ENCODE measurements at regions of chr21 and their contacts with region 1.

Region 1: DNA sequence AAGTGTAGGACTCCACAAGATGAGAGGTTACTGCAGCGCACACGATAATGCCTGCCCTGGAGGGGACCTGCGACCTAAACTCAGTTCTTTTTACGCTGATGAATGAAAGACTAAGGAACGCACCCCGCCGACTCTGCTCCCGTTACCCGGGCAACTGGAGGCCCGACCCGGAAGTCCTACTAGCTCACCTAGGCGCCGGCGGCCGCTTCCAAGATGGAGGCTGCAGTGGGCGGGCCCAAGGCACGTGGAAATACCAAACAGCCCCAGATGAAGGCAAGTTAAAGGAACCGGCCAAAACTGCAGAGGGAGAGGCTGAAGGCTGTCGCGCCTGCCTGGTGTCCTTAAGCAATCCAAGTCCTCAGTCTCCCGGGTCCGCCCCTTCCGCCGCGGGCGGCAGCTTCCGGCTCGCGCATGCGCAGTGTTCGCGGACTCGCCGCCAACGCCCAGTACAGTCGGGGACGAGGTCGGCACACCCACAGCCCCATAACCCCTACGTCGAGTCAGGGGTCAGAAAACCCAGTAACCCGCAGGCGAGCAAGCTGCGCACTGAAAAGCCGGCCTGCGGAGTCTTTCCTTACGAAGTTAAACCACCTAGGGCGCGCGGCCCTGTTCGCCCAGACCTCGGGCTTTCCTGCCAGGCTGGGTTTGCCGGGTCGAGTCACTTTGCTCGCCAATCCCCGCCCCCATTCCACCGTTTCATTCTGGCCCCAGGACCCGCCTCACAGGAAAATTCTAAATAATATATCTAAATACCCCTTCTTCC is at the start of gene SETD4:
- DNase-seq: peak; percentile 94
- H3K4me3 Mint-ChIP-seq: peak within 1 kb of the TSS; percentile 82
- H3K27ac Mint-ChIP-seq: peak within 1 kb of the TSS; percentile 90
- H3K4me1 Mint-ChIP-seq: peaks cover 21% of the 10 kb centered on the region
- H3K27me3 Mint-ChIP-seq: no peaks in the 10 kb centered on the region
- total RNA-seq, gene SETD4: 13.5 to 18.9 TPM

Region 2: GRCh38 chr21:35829067-35829466 is 231.3 kb before region 1 on chr21:
- CTCF ChIA-PET with region 1: no interaction called
- POLR2A ChIA-PET with region 1: no interaction called
- intact Hi-C with region 1: no loop called
- DNase-seq: no peak
- H3K4me3 Mint-ChIP-seq: no peak overlapping the region
- H3K27ac Mint-ChIP-seq: no peak overlapping the region
- H3K4me1 Mint-ChIP-seq: no peaks in the 10 kb centered on the region
- H3K27me3 Mint-ChIP-seq: peaks cover 21% of the 10 kb centered on the region

Region 3: DNA sequence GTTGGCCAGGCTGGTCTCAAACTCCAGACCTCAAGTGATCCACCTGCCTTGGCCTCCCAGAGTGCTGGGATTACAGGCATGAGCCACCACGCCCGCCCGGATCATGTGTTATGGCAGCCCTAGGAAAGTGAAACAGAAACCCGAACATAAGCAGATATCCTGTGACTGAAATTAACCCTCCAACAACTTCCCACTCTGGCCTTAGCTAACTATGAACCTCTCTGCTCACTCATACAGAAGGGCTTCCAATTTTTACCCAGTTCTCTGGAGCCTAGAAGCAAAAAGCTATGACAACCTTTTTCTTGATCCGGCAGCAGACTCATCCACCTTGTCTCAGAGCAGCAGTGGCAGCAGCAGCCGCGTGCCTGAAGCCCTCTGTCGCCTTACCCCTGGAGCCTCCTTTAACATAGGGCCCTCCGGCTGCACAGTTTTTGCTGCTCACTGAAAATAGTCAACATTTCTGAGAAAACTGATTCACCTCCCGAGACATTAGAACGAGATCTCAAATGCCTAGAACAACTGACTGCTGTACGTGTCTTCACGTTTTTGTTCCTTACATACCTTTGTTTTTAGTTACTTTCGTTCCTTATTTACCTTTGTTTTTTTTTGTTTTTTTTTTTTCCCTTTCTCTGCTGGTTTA is 18.8 kb after region 1 on chr21:
- CTCF ChIA-PET with region 1: interaction called, 8 read pairs
- POLR2A ChIA-PET with region 1: no interaction called
- intact Hi-C with region 1: loop called (anchors 1 kb)
- DNase-seq: peak; percentile 64
- H3K4me3 Mint-ChIP-seq: peak overlapping the region; percentile 64
- H3K27ac Mint-ChIP-seq: peak overlapping the region; percentile 91
- H3K4me1 Mint-ChIP-seq: peaks cover 31% of the 10 kb centered on the region
- H3K27me3 Mint-ChIP-seq: no peaks in the 10 kb centered on the region

Region 4: DNA sequence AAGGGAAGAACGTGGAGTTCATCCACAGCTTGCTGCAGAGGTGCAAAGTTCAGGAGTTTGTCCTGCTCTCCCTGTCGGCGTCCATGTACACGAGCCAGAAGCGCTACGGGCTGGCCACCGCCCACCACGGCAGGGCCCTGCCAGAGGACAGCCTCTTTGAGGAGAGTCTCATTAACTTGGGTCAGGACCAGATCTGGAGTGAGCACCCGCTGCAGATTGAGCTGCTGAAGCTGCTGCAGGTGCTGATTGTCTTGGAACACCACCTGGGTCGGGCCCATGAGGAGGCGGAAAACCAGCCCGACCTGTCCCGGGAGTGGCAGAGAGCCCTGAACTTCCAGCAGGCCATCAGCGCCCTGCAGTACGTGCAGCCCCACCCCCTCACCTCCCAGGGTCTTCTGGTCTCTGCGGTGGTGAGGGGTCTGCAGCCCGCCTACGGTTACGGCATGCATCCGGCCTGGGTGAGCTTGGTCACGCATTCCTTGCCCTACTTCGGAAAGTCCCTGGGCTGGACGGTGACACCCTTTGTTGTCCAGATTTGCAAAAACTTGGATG is 185.8 kb after region 1 on chr21:
- CTCF ChIA-PET with region 1: no interaction called
- POLR2A ChIA-PET with region 1: no interaction called
- intact Hi-C with region 1: no loop called
- DNase-seq: no peak
- H3K4me3 Mint-ChIP-seq: no peak overlapping the region
- H3K27ac Mint-ChIP-seq: no peak overlapping the region
- H3K4me1 Mint-ChIP-seq: no peaks in the 10 kb centered on the region
- H3K27me3 Mint-ChIP-seq: no peaks in the 10 kb centered on the region

Region 5: DNA sequence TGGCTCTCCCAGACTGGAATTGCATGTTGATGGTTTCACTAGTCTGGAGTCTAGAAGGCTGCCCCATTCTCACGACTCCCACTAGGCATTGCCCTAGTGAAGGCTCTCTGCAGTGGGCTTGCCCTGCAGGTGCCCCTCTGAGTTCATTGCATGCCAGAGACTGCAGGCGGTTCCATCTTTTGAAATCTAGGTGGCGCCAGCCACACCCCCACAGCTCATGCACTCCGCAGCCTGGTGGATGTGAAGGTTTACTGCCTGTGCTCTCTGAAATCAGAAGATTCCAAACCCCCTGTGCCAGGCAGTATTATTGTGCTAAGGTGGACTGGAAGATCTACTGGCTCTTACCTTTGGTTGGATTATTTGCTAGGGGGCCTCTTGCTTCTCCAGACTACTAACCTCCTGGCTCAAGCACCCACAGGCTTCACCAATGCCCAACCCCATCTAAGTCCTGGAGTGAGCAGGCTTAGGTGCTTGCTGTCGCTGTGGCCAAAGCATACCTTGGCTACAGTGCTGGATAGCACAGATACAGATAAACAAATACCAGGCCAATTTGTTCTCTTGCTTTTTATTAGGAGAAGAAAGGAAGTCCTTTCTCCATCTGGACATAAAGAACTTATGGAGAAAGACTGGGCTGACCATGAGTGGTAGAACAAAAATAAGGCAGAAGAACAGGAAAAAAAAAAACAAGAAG is 555.1 kb after region 1 on chr21:
- CTCF ChIA-PET with region 1: no interaction called
- POLR2A ChIA-PET with region 1: no interaction called
- intact Hi-C with region 1: no loop called
- DNase-seq: no peak
- H3K4me3 Mint-ChIP-seq: no peak overlapping the region
- H3K27ac Mint-ChIP-seq: no peak overlapping the region
- H3K4me1 Mint-ChIP-seq: no peaks in the 10 kb centered on the region
- H3K27me3 Mint-ChIP-seq: peaks cover 33% of the 10 kb centered on the region